ENCODE measurements at regions of chr1 and their contacts with region 1.

Region 1: GRCh38 chr1:7218210-7218832 is 433.1 kb downstream of the CAMTA1 start:
- DNase-seq: peak in 2 of 3 donors; percentile 8 to 10
- H3K4me3 ChIP-seq: no peak overlapping the region
- H3K4me3 Mint-ChIP-seq: no peak overlapping the region
- H3K27ac ChIP-seq: no peak overlapping the region
- H3K27ac Mint-ChIP-seq: no peak overlapping the region
- H3K4me1 ChIP-seq: no peaks in the 10 kb centered on the region
- H3K4me1 Mint-ChIP-seq: no peaks in the 10 kb centered on the region
- H3K27me3 ChIP-seq: no peaks in the 10 kb centered on the region
- H3K27me3 Mint-ChIP-seq: peaks cover 0 to 2% (median 0%) of the 10 kb centered on the region in 3 donors
- CTCF ChIP-seq: peak; percentile 68

Region 2: DNA sequence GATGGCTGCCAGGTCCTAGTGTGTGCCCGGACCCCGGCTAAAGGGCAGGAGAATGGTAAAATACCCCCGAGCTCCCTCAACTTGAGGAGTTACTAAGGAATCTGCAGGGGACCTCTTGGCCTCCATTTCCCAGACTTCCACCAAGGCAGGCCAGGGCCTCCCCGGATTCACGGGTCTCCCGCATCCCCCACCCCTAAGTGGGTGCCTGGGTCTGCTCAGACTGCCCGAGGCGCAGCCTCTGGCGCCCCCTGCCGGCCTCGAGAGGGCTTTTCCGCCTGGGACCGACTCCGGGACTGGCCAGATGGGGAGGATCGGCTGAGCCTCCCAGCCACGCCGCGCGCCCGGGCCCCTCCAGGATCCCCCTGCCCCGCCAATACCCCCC is 728.5 kb before region 1 on chr1:
- intact Hi-C with region 1: loop called in 1 of 2 experiments (anchors 5 kb)
- DNase-seq: peak; percentile 24 to 49 (median 32)
- H3K4me3 ChIP-seq: no peak overlapping the region
- H3K4me3 Mint-ChIP-seq: peak overlapping the region; percentile 31 to 69
- H3K27ac ChIP-seq: no peak overlapping the region
- H3K27ac Mint-ChIP-seq: no peak overlapping the region
- H3K4me1 ChIP-seq: peaks cover 9 to 10% of the 10 kb centered on the region in 2 donors
- H3K4me1 Mint-ChIP-seq: peaks cover 5% of the 10 kb centered on the region
- H3K27me3 ChIP-seq: peaks cover 5 to 49% of the 10 kb centered on the region in 2 donors
- H3K27me3 Mint-ChIP-seq: peaks cover 48 to 74% (median 53%) of the 10 kb centered on the region in 3 donors
- CTCF ChIP-seq: peak; percentile 93

Region 3: DNA sequence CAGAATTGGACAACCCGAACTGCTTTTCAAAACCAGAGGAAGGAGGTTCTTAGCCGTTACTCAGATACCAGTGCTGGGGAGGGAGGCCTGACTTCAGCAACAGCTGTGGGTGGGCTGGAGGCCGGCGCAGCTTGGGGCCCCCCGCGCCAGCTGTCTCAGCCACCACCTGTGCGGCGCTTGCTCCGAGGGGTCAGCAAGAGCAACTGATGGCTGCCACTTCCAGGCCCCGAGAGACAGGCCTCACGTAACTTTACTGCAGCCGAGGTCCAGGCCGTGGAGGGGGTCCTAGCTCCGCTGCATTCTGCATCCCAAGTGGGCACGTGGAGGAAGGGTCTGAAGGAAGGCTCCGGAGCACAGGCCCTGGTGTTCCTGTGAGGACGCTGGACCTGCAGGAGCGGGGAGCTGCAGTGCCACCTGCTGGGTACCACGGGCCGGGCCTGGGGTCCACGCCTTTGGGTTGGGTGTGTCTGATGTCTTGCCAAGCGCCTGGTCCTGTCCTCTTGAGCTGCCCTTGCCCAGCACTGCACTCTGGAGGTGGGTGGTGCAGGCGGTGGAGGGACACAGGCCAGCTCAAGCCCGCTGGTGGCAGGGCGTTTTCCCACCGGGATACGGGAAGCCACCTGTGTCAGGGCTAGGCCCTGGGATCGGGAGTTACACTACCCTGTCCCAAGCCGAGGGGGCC is 583.8 kb before region 1 on chr1:
- intact Hi-C with region 1: no loop called
- DNase-seq: peak; percentile 2 to 22 (median 13)
- H3K4me3 ChIP-seq: no peak overlapping the region
- H3K4me3 Mint-ChIP-seq: no peak overlapping the region
- H3K27ac ChIP-seq: no peak overlapping the region
- H3K27ac Mint-ChIP-seq: no peak overlapping the region
- H3K4me1 ChIP-seq: no peaks in the 10 kb centered on the region
- H3K4me1 Mint-ChIP-seq: no peaks in the 10 kb centered on the region
- H3K27me3 ChIP-seq: no peaks in the 10 kb centered on the region
- H3K27me3 Mint-ChIP-seq: peaks cover 0 to 4% (median 0%) of the 10 kb centered on the region in 3 donors
- CTCF ChIP-seq: peak; percentile 41

Region 4: DNA sequence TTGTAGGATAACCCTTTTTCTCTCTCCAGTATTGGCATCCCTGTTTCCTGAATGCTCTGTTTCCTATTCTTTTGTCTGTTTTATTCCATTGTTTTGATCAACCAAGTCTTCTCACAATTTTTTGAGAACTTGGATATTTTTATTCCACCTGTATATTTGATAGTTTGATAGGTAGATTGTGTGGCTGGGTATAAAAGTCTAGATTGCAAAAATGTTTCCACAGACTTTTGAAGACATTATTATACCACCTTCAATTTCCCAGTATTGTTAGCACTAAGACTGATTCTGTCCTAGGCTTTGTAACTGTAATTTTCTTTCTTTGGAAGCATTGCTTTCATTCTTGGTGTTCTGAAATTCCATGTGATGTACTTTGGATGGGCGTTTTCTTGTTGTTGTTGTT is 507.1 kb before region 1 on chr1:
- intact Hi-C with region 1: loop called in 1 of 2 experiments (anchors 10 kb)
- DNase-seq: no peak
- H3K4me3 ChIP-seq: no peak overlapping the region
- H3K4me3 Mint-ChIP-seq: no peak overlapping the region
- H3K27ac ChIP-seq: no peak overlapping the region
- H3K27ac Mint-ChIP-seq: no peak overlapping the region
- H3K4me1 ChIP-seq: no peaks in the 10 kb centered on the region
- H3K4me1 Mint-ChIP-seq: no peaks in the 10 kb centered on the region
- H3K27me3 ChIP-seq: no peaks in the 10 kb centered on the region
- H3K27me3 Mint-ChIP-seq: peaks cover 4 to 13% (median 11%) of the 10 kb centered on the region in 3 donors
- CTCF ChIP-seq: no peak

Region 5: DNA sequence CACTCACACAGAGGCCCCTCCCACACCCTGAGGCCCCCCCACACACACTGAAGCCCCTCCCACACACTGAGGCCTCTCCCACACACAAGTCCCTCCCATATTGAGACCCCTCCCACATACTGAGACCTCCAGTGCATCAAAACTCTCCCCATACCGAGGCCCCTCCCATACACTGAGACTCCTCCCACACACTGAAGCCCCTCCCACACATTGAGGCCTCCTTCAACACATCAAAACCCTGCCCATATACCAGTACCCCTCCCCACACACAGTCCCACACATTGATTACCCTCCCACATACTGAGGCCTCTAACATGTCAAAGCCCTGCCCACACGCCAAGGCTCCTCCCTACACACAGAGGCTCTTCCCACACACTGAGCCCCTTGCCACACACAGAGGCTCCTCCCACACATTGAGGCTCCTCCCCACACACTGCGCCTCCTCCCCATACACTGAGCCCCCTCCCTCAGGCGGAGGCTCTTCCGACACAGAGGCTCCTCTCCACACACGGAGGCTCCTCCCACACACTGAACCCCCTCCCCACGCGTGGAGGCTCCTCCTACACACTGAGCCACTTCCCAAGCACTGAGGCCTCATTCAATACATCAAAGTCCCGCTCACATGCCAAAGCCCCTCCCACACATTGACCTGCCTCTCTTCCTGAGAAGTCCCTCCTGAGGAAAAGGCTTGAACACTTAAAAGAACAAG is 40.7 kb before region 1 on chr1:
- intact Hi-C with region 1: no loop called
- DNase-seq: no peak
- H3K4me3 ChIP-seq: no peak overlapping the region
- H3K4me3 Mint-ChIP-seq: no peak overlapping the region
- H3K27ac ChIP-seq: no peak overlapping the region
- H3K27ac Mint-ChIP-seq: no peak overlapping the region
- H3K4me1 ChIP-seq: no peaks in the 10 kb centered on the region
- H3K4me1 Mint-ChIP-seq: peaks cover 2% of the 10 kb centered on the region
- H3K27me3 ChIP-seq: no peaks in the 10 kb centered on the region
- H3K27me3 Mint-ChIP-seq: peaks cover 2 to 14% (median 4%) of the 10 kb centered on the region in 3 donors
- CTCF ChIP-seq: no peak

Measured in CD14-positive monocyte (primary cell).